ENCODE measurements at regions of chr9 and their contacts with region 1.

Region 1: GRCh38 chr9:36400332-36401163 is 479 bp upstream of the RNF38 start:
- DNase-seq: peak; percentile 92
- ATAC-seq: peak; percentile 79 to 89 (median 84)
- H3K4me3 ChIP-seq: peak overlapping the region; percentile 56 to 77 (median 67)
- H3K27ac ChIP-seq: peak overlapping the region; percentile 72 to 89 (median 80)
- H3K4me1 ChIP-seq: peaks cover 0 to 24% (median 7%) of the 10 kb centered on the region in 4 donors
- H3K27me3 ChIP-seq: no peaks in the 10 kb centered on the region
- CTCF ChIP-seq: peak in 1 of 4 donors; percentile 25
- POLR2A ChIP-seq: peak; percentile 80

Region 2: DNA sequence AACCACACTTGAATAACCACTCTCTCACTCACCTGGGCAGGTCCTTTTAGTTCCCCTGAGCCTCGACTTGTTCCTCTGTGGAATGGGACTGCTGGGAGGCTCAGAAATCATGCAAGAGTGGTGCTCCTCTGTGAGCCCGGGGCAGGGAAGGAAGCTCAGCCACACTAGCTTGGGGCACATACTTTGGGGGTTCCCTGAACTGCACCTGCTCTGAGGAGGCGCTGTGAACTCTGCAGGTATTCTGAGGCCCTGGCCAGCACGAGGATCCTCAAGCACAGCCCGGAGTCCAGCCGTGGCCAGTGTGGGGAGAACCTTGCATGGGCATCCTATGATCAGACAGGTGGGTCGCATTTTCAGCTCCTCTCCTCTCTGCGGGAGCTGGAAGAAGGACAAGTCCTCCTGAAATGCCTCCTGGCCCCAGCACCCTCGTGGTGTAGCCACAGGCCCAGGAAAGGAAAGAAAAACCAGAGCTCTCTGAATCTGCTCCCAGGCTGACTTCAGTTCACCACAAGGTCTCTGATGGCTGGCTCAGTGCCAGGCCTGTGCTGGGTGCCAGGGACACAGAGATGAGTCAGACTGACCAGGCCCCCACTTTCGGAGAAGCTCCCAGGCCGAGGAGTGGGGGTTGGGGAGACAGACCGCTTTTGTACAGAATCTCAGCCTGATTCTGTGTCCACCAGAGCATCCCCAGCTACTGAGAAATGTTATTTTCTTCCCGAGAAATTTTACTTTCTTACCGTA is 252.1 kb before region 1 on chr9:
- intact Hi-C with region 1: no loop called
- DNase-seq: peak; percentile 77 to 82 (median 77)
- ATAC-seq: peak; percentile 28 to 66 (median 47)
- H3K4me3 ChIP-seq: no peak overlapping the region
- H3K27ac ChIP-seq: peak overlapping the region in 1 of 3 donors; percentile 10
- H3K4me1 ChIP-seq: no peaks in the 10 kb centered on the region
- H3K27me3 ChIP-seq: no peaks in the 10 kb centered on the region
- CTCF ChIP-seq: no peak
- POLR2A ChIP-seq: no peak

Region 3: GRCh38 chr9:36450110-36450732 is 49.7 kb after region 1 on chr9:
- intact Hi-C with region 1: loop called (anchors 5 kb)
- DNase-seq: no peak
- ATAC-seq: peak; percentile 66 to 74 (median 72)
- H3K4me3 ChIP-seq: no peak overlapping the region
- H3K27ac ChIP-seq: no peak overlapping the region
- H3K4me1 ChIP-seq: peaks cover 0 to 9% (median 0%) of the 10 kb centered on the region in 4 donors
- H3K27me3 ChIP-seq: no peaks in the 10 kb centered on the region
- CTCF ChIP-seq: peak; percentile 71 to 79 (median 74)
- POLR2A ChIP-seq: no peak

Region 4: GRCh38 chr9:36551129-36551528 is 150.6 kb after region 1 on chr9:
- intact Hi-C with region 1: loop called (anchors 10 kb)
- DNase-seq: no peak
- ATAC-seq: no peak
- H3K4me3 ChIP-seq: no peak overlapping the region
- H3K27ac ChIP-seq: no peak overlapping the region
- H3K4me1 ChIP-seq: no peaks in the 10 kb centered on the region
- H3K27me3 ChIP-seq: no peaks in the 10 kb centered on the region
- CTCF ChIP-seq: no peak
- POLR2A ChIP-seq: no peak